Left lung (tissue), 14 donors: ENCODE measurements at regions of chr13 and their contacts with region 1.

Region 1: DNA sequence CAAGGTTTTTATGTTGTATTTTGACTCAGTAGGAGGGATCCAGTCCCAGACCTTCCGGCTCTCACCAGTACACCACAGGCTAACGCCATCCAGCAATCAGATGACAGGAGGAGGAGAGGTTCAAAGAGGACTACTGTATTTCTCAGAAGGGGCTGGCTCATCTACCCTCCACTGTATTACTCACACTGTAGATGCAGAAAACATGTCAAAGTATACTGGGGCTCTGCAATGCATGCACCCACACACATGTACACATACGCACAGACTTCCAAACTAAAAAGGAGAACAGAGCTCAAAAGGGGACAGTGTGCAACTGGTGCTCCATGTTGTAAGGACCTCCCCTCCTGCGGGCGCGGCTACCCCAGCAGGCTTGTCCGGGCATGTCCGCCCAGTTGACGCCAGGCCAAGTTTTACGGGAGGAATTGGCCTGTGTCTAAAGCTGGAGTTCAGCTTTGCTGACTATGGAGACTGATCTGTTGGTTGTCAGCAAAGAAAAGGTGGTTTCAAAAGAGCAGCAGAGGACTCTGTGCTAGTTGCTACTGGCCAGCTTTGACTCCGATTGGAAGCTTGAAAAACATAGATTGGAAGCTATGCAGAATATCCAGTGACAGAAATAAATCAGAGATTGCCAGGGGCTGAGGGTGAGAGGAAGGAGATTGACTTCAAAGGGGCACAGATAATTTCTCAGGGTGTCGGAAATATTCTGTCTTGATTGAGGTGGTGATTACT is 314.2 kb downstream of the DLEU7 start:
- DNase-seq: peak in 3 of 4 donors; percentile 74 to 90 (median 88)
- ATAC-seq: peak; percentile 89
- H3K4me3 ChIP-seq: no peak overlapping the region
- H3K27ac ChIP-seq: peak overlapping the region; percentile 48 to 62
- H3K4me1 ChIP-seq: peaks cover 10 to 45% of the 10 kb centered on the region in 2 donors
- H3K27me3 ChIP-seq: no peaks in the 10 kb centered on the region
- CTCF ChIP-seq: no peak

Region 2: DNA sequence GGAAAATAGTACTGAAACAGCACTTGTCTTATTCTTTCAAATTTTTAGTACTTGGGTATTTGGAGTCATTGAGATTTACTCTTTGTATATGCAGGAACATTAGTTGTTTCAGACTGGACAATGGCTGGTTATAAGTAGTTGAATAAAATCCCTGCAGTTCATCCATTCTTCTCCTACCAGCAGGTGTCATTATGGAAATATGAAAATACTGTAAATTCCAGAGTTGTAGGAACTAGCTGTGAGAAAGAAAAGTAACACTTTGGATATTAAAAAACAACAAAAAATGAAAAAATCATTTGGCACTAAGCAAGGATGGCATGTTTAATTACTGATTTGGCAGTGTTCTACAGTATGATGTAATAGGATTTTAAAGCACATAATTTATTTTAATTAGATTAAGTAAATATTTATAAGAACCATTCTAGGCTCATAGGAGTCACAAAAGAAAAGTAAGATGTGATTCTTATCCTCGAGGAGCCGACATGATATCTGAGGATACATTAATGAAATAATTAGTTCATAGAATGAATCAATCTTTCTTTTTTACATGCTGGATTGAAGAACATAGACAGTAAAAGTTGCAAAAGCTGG is 358.8 kb before region 1 on chr13:
- intact Hi-C with region 1: loop called in 1 of 2 experiments (anchors 10 kb)
- DNase-seq: peak in 1 of 4 donors; percentile 28
- ATAC-seq: peak; percentile 69
- H3K4me3 ChIP-seq: no peak overlapping the region
- H3K27ac ChIP-seq: no peak overlapping the region
- H3K4me1 ChIP-seq: no peaks in the 10 kb centered on the region
- H3K27me3 ChIP-seq: no peaks in the 10 kb centered on the region
- CTCF ChIP-seq: peak; percentile 26 to 47

Region 3: GRCh38 chr13:50707628-50708027 is 178.3 kb after region 1 on chr13:
- intact Hi-C with region 1: no loop called
- DNase-seq: no peak
- ATAC-seq: no peak
- H3K4me3 ChIP-seq: no peak overlapping the region
- H3K27ac ChIP-seq: no peak overlapping the region
- H3K4me1 ChIP-seq: peaks cover 7 to 23% of the 10 kb centered on the region in 2 donors
- H3K27me3 ChIP-seq: no peaks in the 10 kb centered on the region
- CTCF ChIP-seq: no peak

Region 4: DNA sequence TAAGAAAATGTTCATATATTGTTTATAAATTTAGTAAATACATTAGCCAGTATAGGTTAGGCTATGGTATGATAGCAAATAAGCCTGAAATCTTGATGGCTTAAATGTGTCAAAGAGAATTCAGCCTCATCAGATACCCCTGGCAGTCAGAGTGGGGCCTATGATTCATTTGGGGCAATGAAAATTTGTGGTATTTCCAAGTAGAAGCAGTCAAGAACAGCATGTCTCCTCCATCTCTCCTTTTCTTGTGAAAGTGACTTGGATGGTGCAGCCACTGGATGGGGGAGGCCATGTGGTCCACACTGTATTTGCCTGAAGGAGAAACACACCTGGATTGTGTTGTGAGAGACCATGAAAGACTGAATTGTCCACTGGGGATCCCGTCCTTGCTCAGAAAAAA is 231.4 kb after region 1 on chr13:
- intact Hi-C with region 1: no loop called
- DNase-seq: no peak
- ATAC-seq: no peak
- H3K4me3 ChIP-seq: no peak overlapping the region
- H3K27ac ChIP-seq: no peak overlapping the region
- H3K4me1 ChIP-seq: no peaks in the 10 kb centered on the region
- H3K27me3 ChIP-seq: no peaks in the 10 kb centered on the region
- CTCF ChIP-seq: no peak

Region 5: GRCh38 chr13:50801087-50801931 is 272.0 kb after region 1 on chr13:
- intact Hi-C with region 1: loop called in 1 of 2 experiments (anchors 10 kb)
- DNase-seq: peak in 3 of 4 donors; percentile 44 to 85 (median 61)
- ATAC-seq: peak; percentile 99
- H3K4me3 ChIP-seq: no peak overlapping the region
- H3K27ac ChIP-seq: no peak overlapping the region
- H3K4me1 ChIP-seq: peaks cover 6 to 21% of the 10 kb centered on the region in 2 donors
- H3K27me3 ChIP-seq: no peaks in the 10 kb centered on the region
- CTCF ChIP-seq: peak; percentile 68 to 75